Activated naive CD4-positive, alpha-beta T cell treated with anti-CD3 and anti-CD28 coated beads for 36 hours (primary cell): ENCODE measurements at regions of chr11 and their contacts with region 1.

Region 1: DNA sequence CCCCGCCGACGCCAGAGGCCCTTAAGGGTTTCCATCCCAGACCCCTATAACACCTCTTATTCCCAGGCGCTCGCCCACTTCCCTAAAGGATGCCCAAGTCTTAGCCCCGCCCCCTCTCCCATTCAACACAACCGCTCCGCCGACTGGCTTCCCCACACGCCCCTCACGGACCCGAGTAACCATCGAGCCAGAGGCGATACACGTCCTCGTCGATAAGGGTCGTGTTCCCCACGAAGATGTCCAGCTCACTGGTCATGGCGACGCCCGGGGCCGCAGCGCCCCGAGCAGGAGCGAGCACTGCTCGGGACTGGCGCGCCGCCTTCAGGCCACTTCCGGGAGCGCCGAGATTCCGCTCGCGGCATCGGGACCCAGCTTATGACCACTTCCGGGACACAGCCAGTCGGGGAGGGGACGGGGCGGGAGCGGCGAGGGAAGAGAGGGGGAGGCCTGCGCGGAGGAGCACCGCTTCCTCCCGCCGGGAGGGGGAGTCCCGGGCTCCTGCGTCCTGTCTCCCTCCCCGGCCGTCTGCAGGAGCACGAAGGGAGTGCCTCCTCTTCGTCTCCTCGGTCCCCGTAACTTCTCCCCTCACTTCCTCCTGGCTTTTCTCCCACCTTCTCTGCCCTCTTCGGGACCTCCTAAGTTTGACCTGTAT is at the start of gene FIBP:
- DNase-seq: peak; percentile 99
- H3K4me3 Mint-ChIP-seq: peak within 1 kb of the TSS; percentile 97
- H3K27ac Mint-ChIP-seq: peak within 1 kb of the TSS; percentile 95
- H3K4me1 Mint-ChIP-seq: peaks cover 62% of the 10 kb centered on the region
- H3K27me3 Mint-ChIP-seq: no peaks in the 10 kb centered on the region
- total RNA-seq, gene FIBP: 83.1 to 86.6 TPM

Region 2: GRCh38 chr11:65850831-65851811 is 37.2 kb before region 1 on chr11:
- CTCF ChIA-PET with region 1: interaction called, 34 read pairs
- intact Hi-C with region 1: no loop called
- DNase-seq: peak; percentile 40
- H3K4me3 Mint-ChIP-seq: no peak overlapping the region
- H3K27ac Mint-ChIP-seq: no peak overlapping the region
- H3K4me1 Mint-ChIP-seq: peaks cover 25% of the 10 kb centered on the region
- H3K27me3 Mint-ChIP-seq: no peaks in the 10 kb centered on the region

Region 3: GRCh38 chr11:65900125-65900898 is 12.0 kb after region 1 on chr11 and contains the start of gene FOSL1:
- CTCF ChIA-PET with region 1: interaction called, 52 read pairs
- intact Hi-C with region 1: loop called (anchors 1 kb)
- DNase-seq: peak; percentile 96
- H3K4me3 Mint-ChIP-seq: peak within 1 kb of the TSS; percentile 83
- H3K27ac Mint-ChIP-seq: peak within 1 kb of the TSS; percentile 79
- H3K4me1 Mint-ChIP-seq: peaks cover 33% of the 10 kb centered on the region
- H3K27me3 Mint-ChIP-seq: peaks cover 2% of the 10 kb centered on the region
- total RNA-seq, gene FOSL1: 8.2 TPM

Region 4: DNA sequence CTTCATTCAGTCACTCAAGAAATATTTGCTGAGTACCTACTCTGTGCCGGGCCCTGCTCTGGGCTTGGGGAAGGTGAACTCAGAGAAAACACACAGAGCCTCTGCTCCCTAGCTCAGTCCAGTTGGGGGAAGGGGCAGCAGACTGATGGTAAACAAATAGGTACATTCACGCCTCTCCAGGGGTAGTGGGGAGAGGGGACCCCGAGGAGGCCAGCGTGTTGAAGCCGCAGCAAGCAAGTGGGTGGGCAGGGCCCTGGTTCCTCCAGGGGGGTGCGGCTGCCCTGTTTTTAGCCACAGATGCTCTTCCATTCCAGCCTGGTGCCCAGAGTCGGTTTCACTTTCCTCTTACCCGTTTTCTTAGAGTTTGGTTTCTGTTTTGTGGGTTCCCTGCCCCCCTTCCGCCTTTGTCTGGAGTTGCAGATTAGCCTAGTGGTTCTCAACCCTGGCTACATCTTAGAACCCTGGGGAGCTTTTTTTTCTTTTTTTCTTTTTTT is 39.7 kb after region 1 on chr11:
- CTCF ChIA-PET with region 1: interaction called, 12 read pairs
- intact Hi-C with region 1: loop called (anchors 1 kb)
- DNase-seq: peak; percentile 91
- H3K4me3 Mint-ChIP-seq: peak overlapping the region; percentile 68
- H3K27ac Mint-ChIP-seq: peak overlapping the region; percentile 97
- H3K4me1 Mint-ChIP-seq: peaks cover 30% of the 10 kb centered on the region
- H3K27me3 Mint-ChIP-seq: no peaks in the 10 kb centered on the region

Region 5: GRCh38 chr11:66045177-66045639 is 156.9 kb after region 1 on chr11:
- CTCF ChIA-PET with region 1: interaction called, 12 read pairs
- intact Hi-C with region 1: loop called (anchors 5 kb)
- DNase-seq: peak; percentile 88
- H3K4me3 Mint-ChIP-seq: peak overlapping the region; percentile 12
- H3K27ac Mint-ChIP-seq: peak overlapping the region; percentile 42
- H3K4me1 Mint-ChIP-seq: peaks cover 19% of the 10 kb centered on the region
- H3K27me3 Mint-ChIP-seq: peaks cover 7% of the 10 kb centered on the region

Region 6: GRCh38 chr11:66268283-66268951 is 380.1 kb after region 1 on chr11 and contains the start of gene RAB1B:
- CTCF ChIA-PET with region 1: no interaction called
- intact Hi-C with region 1: loop called (anchors 2 kb)
- DNase-seq: peak; percentile 100
- H3K4me3 Mint-ChIP-seq: peak within 1 kb of the TSS; percentile 95
- H3K27ac Mint-ChIP-seq: peak within 1 kb of the TSS; percentile 95
- H3K4me1 Mint-ChIP-seq: peaks cover 26% of the 10 kb centered on the region
- H3K27me3 Mint-ChIP-seq: no peaks in the 10 kb centered on the region
- total RNA-seq, gene RAB1B: 112 to 115 TPM